Naive thymus-derived CD4-positive, alpha-beta T cell (primary cell): ENCODE measurements at regions of chr15 and their contacts with region 1.

Region 1: GRCh38 chr15:40782580-40783227 is 12.9 kb downstream of the C15orf62 start:
- DNase-seq: peak; percentile 63 to 78 (median 75)
- ATAC-seq: peak; percentile 99
- H3K4me3 ChIP-seq: no peak overlapping the region
- H3K4me3 Mint-ChIP-seq: no peak overlapping the region
- H3K27ac ChIP-seq: no peak overlapping the region
- H3K27ac Mint-ChIP-seq: peak overlapping the region in 2 of 9 donors; percentile 34 to 39
- H3K4me1 ChIP-seq: peaks cover 8 to 13% of the 10 kb centered on the region in 2 donors
- H3K4me1 Mint-ChIP-seq: peaks cover 12 to 25% (median 20%) of the 10 kb centered on the region in 7 donors
- H3K27me3 ChIP-seq: no peaks in the 10 kb centered on the region
- H3K27me3 Mint-ChIP-seq: no peaks in the 10 kb centered on the region

Region 2: GRCh38 chr15:40684381-40684780 is 98.3 kb before region 1 on chr15:
- CTCF ChIA-PET with region 1: interaction called, 48 read pairs
- POLR2A ChIA-PET with region 1: no interaction called
- intact Hi-C with region 1: loop called (anchors 1 to 5 kb)
- DNase-seq: no peak
- ATAC-seq: no peak
- H3K4me3 ChIP-seq: no peak overlapping the region
- H3K4me3 Mint-ChIP-seq: no peak overlapping the region
- H3K27ac ChIP-seq: no peak overlapping the region
- H3K27ac Mint-ChIP-seq: peak overlapping the region in 3 of 9 donors; percentile 41 to 57 (median 47)
- H3K4me1 ChIP-seq: no peaks in the 10 kb centered on the region
- H3K4me1 Mint-ChIP-seq: peaks cover 0 to under 1% (median 0%) of the 10 kb centered on the region in 7 donors
- H3K27me3 ChIP-seq: no peaks in the 10 kb centered on the region
- H3K27me3 Mint-ChIP-seq: peaks cover 0 to 3% (median 0%) of the 10 kb centered on the region in 5 donors

Region 3: DNA sequence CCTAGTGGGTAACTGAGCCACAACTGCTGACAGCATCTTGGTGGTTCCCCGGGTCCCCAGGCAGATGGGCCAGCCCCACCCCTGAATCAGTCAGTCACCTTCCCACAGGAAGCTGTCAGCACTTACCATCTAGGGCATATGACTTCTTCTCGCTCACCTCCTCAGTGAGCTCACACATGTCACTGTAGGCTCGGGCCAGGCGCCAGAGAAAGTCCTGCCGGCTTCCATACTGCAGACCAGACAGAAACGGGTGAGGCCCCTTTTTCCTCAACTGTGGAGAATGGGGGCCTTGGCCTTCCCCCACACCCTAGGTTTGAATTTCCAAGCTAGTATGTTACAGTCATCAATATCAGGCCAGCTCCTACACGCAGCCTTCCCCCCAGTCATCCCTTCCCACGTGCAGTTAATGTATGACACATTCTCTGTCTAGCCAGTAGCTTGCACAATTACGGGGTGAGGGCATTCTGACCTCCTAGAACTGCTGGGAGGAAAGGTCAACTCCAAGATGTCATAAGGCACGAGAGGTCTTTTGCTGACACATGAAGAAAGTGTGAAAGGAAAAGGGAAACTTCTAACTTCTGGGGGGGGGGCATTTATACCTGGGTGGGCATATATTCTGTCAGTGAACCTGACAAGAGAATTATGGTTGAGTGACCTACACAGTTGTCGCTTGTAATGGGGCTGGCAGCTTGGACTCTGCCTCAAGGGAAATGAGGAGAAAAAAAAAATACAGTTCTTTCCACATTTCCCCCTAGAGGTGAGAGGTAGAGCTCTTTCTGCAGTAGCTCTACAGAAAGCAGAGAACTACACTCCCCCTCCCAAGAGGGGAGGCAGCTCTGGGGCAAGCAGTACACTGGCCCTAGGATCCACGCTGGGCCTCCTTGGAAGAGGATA is 38.5 kb before region 1 on chr15:
- CTCF ChIA-PET with region 1: interaction called, 7 read pairs
- POLR2A ChIA-PET with region 1: no interaction called
- intact Hi-C with region 1: loop called (anchors 1 to 5 kb)
- DNase-seq: peak in 1 of 9 donors; percentile 68
- ATAC-seq: peak; percentile 90
- H3K4me3 ChIP-seq: no peak overlapping the region
- H3K4me3 Mint-ChIP-seq: peak overlapping the region in 2 of 10 donors; percentile 25 to 74
- H3K27ac ChIP-seq: no peak overlapping the region
- H3K27ac Mint-ChIP-seq: peak overlapping the region in 3 of 9 donors; percentile 30 to 94 (median 69)
- H3K4me1 ChIP-seq: peaks cover 0 to 20% of the 10 kb centered on the region in 2 donors
- H3K4me1 Mint-ChIP-seq: peaks cover 0 to 40% (median 0%) of the 10 kb centered on the region in 7 donors
- H3K27me3 ChIP-seq: no peaks in the 10 kb centered on the region
- H3K27me3 Mint-ChIP-seq: no peaks in the 10 kb centered on the region

Region 4: GRCh38 chr15:40763801-40764732 is 18.6 kb before region 1 on chr15 and contains the start of gene GCHFR:
- CTCF ChIA-PET with region 1: interaction called, 6 read pairs
- POLR2A ChIA-PET with region 1: interaction called, 3 read pairs
- intact Hi-C with region 1: loop called in 1 of 2 experiments (anchors 2 kb)
- DNase-seq: peak; percentile 53 to 86 (median 57)
- ATAC-seq: peak; percentile 72
- H3K4me3 ChIP-seq: peak within 1 kb of the TSS; percentile 71
- H3K4me3 Mint-ChIP-seq: peak within 1 kb of the TSS; percentile 76 to 94 (median 90)
- H3K27ac ChIP-seq: peak within 1 kb of the TSS; percentile 78
- H3K27ac Mint-ChIP-seq: peak within 1 kb of the TSS; percentile 82 to 94 (median 87)
- H3K4me1 ChIP-seq: peaks cover 17 to 21% of the 10 kb centered on the region in 2 donors
- H3K4me1 Mint-ChIP-seq: peaks cover 10 to 39% (median 36%) of the 10 kb centered on the region in 7 donors
- H3K27me3 ChIP-seq: no peaks in the 10 kb centered on the region
- H3K27me3 Mint-ChIP-seq: no peaks in the 10 kb centered on the region
- total RNA-seq, gene GCHFR: 14.5 to 38.3 (median 18.1) TPM

Region 5: DNA sequence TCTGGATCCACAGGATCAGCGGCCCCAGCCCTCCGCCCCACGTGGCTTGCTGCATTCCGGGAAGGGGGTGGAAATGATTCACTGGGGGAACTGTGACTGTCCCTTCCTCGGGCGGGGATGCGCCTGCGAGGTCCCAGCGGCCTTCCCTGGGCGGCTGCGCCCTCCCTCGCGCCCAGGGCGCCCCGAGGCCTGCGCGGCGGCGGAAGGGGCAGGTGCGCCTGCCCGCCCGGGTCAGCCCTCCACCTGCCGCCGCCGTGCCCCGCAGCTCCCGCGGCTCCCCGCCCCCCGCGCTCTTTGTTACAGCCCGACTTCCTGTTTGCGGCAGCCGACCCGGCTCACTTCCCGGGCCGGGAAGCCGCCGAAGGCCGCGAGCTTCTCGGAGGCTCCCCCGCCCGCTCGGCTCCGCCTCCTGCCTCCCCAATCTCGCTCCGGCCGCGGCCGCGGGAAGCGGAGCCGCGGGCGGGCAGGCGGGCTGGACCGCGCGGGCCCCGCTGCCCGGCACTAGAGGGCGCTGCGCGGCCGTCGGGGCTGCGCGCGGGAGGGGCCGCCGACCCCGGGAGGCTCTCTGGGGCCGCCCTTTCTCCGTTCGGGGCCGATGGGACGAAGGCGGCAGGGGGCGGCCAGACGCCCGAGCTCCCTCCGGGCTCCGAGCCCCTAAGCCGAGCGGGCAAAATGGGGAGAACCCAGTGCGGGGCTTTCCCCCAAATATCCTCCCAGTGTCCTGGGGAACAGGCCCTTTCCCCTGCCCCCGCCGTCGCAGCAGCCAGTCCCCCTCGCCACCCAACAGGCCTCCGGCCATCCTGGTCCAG is 159.0 kb after region 1 on chr15:
- CTCF ChIA-PET with region 1: no interaction called
- POLR2A ChIA-PET with region 1: no interaction called
- intact Hi-C with region 1: no loop called
- DNase-seq: peak; percentile 59 to 84 (median 70)
- ATAC-seq: peak; percentile 86
- H3K4me3 ChIP-seq: peak overlapping the region; percentile 82
- H3K4me3 Mint-ChIP-seq: peak overlapping the region; percentile 79 to 95 (median 88)
- H3K27ac ChIP-seq: peak overlapping the region; percentile 75
- H3K27ac Mint-ChIP-seq: peak overlapping the region; percentile 58 to 92 (median 89)
- H3K4me1 ChIP-seq: peaks cover 12 to 27% of the 10 kb centered on the region in 2 donors
- H3K4me1 Mint-ChIP-seq: peaks cover 17 to 47% (median 44%) of the 10 kb centered on the region in 7 donors
- H3K27me3 ChIP-seq: no peaks in the 10 kb centered on the region
- H3K27me3 Mint-ChIP-seq: no peaks in the 10 kb centered on the region

Region 6: DNA sequence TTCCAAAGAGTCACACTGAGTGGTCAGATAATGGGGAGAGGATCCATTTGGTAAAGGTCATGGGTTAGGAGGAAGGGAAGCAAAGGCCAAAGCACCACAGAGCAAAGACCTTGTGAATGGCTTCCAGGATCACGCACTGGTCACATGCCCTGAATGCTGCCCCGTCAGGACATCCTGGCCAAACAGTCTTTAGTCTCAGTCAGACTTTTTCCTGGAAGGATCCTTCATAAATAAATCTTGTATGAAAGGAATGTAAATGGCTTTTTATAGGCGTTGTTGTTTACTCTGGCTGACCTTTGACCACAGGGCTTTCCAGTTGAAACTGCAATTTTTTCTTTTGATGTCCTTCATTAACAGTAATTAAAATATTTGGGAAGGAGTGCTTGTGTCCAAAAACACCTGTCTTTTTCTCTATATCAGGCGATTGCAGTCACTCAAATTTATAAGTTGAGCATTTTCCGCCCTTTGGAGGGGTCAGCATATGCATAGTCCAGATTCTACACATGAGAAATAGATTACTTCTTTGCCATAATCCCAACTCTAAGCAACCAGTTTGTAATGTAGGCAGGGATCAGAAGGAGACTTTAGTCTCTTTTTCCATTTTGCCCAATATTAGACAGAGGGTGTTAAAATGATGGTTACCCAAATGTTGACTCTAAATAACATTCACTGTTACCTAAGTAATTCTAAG is 219.0 kb after region 1 on chr15:
- CTCF ChIA-PET with region 1: no interaction called
- POLR2A ChIA-PET with region 1: no interaction called
- intact Hi-C with region 1: no loop called
- DNase-seq: no peak
- ATAC-seq: no peak
- H3K4me3 ChIP-seq: no peak overlapping the region
- H3K4me3 Mint-ChIP-seq: no peak overlapping the region
- H3K27ac ChIP-seq: no peak overlapping the region
- H3K27ac Mint-ChIP-seq: peak overlapping the region in 1 of 9 donors; percentile 65
- H3K4me1 ChIP-seq: no peaks in the 10 kb centered on the region
- H3K4me1 Mint-ChIP-seq: peaks cover 0 to 2% (median 0%) of the 10 kb centered on the region in 7 donors
- H3K27me3 ChIP-seq: no peaks in the 10 kb centered on the region
- H3K27me3 Mint-ChIP-seq: no peaks in the 10 kb centered on the region

Region 7: DNA sequence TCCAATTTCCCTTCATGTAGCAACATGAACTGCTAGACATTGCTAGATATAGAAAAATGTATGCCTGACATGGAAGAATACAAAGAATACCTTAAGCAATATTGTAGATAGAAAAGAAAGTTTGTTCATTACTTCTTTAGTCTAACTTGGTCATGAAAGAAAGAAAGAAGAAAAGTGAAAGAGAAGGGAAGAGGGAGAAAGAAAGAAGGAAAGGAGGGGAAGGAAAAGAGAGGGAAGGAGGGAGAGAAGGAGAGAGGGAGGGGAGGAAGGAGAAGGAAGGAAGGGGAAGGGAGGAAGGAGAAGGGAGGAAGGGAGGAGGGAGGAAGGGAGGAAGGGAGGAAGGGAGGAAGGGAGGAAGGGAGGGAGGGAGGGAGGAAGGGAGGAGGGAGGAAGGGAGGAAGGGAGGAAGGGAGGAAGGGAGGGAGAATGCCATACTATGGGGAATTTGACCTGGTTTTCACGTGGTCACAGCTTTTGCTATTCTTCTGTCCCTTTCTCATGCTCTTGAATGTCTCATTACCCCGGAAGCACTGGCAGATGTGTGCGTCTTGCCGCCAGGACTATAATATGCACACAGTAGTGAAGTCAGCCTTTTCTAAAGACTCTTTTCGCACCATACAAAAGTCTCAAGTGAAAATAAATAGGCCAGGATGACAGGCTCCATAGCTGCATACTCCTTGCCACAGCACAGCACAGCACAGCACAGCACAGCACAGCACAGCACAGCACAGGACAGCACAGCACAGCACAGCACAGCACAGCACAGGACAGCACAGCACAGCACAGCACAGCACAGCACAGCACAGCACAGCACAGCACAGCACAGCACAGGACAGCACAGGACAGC is 248.8 kb after region 1 on chr15:
- CTCF ChIA-PET with region 1: no interaction called
- POLR2A ChIA-PET with region 1: no interaction called
- intact Hi-C with region 1: no loop called
- DNase-seq: no peak
- ATAC-seq: no peak
- H3K4me3 ChIP-seq: no peak overlapping the region
- H3K4me3 Mint-ChIP-seq: no peak overlapping the region
- H3K27ac ChIP-seq: no peak overlapping the region
- H3K27ac Mint-ChIP-seq: peak overlapping the region in 6 of 9 donors; percentile 14 to 65 (median 49)
- H3K4me1 ChIP-seq: no peaks in the 10 kb centered on the region
- H3K4me1 Mint-ChIP-seq: peaks cover 2 to 27% (median 16%) of the 10 kb centered on the region in 7 donors
- H3K27me3 ChIP-seq: no peaks in the 10 kb centered on the region
- H3K27me3 Mint-ChIP-seq: no peaks in the 10 kb centered on the region